ENCODE measurements at regions of chr3 and their contacts with region 1.

Region 1: GRCh38 chr3:146454796-146455195 is 14.6 kb downstream of the PLSCR2 start:
- DNase-seq: no peak
- H3K4me3 Mint-ChIP-seq: no peak overlapping the region
- H3K27ac Mint-ChIP-seq: no peak overlapping the region
- H3K4me1 Mint-ChIP-seq: no peaks in the 10 kb centered on the region
- H3K27me3 Mint-ChIP-seq: peaks cover 10% of the 10 kb centered on the region

Region 2: DNA sequence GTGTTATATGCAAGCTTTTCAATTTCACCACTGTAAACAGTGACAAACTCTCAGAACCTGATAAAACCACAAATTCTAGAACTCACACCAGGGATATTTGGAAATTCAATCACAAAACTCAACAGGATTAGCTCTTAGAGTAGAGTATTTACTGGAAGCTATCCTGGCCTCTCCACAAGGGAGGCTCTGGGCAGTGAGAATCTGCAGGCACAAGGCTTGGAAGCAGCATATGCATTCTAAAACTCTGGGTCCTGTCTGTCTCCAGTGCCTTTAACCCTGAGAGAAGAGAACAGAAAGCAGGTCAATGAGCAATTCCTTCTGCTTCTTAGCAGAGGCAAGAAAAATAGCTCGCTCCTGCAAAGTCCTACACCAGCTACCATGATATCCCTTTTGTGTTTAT is 227.3 kb before region 1 on chr3:
- intact Hi-C with region 1: loop called (anchors 5 kb)
- DNase-seq: no peak
- H3K4me3 Mint-ChIP-seq: no peak overlapping the region
- H3K27ac Mint-ChIP-seq: no peak overlapping the region
- H3K4me1 Mint-ChIP-seq: no peaks in the 10 kb centered on the region
- H3K27me3 Mint-ChIP-seq: peaks cover 1% of the 10 kb centered on the region

Region 3: GRCh38 chr3:146491303-146491702 is 36.5 kb after region 1 on chr3:
- intact Hi-C with region 1: no loop called
- DNase-seq: no peak
- H3K4me3 Mint-ChIP-seq: no peak overlapping the region
- H3K27ac Mint-ChIP-seq: no peak overlapping the region
- H3K4me1 Mint-ChIP-seq: peaks cover 4% of the 10 kb centered on the region
- H3K27me3 Mint-ChIP-seq: peaks cover 31% of the 10 kb centered on the region

Region 4: DNA sequence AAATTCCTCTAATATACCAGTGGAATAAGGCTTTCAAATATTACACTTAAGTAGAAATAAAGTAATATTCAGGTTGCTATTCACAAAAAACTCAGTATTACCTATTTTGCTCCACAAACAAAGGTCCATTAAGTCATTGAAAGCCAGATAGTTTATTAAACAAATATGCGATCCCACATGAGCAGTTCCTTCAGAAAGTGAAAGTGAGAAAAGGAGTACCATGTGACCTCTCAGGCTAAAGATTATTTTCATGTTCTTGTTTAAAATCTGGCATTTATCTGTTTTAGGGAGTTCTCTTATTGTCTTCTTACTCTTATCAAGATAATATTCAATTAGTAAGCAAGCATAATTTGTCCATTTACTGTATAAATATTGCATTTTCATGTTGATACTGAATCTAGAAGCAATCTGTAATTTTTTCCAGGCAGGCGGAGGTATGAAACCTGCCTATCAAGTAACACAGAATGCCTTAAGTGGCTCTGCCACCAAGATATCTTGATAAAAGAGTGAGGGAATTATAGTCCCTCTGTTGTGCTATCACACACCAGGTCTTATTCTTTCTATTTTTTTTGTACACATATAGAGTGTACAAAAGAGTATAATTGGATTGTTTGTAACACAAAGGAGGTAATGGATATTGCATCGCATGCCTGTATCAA is 170.4 kb after region 1 on chr3:
- intact Hi-C with region 1: no loop called
- DNase-seq: no peak
- H3K4me3 Mint-ChIP-seq: no peak overlapping the region
- H3K27ac Mint-ChIP-seq: no peak overlapping the region
- H3K4me1 Mint-ChIP-seq: no peaks in the 10 kb centered on the region
- H3K27me3 Mint-ChIP-seq: peaks cover 1% of the 10 kb centered on the region